Left ventricle myocardium superior (tissue), 1 donor: ENCODE measurements at regions of chr3 and their contacts with region 1.

Region 1: DNA sequence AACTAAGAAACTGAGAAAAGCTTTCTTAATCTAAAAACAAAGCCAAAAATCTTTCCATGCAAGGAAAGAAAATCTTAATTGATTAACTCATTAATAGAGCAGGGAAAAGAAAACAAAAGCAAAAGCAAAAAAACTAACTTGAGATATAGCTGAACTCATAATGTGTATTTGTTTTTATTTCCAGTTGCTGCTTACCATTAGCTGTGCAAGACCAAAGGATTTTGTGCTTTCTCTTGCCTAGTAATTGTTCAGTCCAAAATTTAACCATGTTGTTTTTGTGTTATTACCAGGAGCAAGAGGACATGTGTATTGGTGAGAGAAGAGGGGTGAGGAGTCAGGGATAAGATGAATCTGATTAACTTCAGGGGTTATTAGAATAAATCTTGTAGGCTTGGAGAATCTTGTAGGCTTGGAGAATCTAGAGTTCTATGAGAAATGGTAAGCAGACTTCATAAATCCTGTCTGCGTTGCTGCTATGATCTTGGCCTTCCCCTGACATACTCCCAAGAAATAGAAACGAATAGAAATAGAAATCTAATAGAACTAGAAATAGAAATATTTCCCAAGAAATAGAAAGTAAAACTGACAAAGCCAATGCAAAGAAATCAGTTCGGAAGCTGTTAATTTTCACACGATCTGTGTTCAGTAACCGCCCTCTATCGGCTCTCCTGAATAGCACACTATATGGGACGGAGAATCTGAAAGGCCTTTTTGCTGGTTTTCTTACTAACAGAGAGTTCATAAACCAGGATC is 72.6 kb upstream of the TNFSF10 start:
- DNase-seq: no peak
- ATAC-seq: peak; percentile 79

Region 2: GRCh38 chr3:172511783-172512762 is 83.7 kb before region 1 on chr3:
- intact Hi-C with region 1: loop called (anchors 10 kb)
- DNase-seq: peak; percentile 69
- ATAC-seq: peak; percentile 69

Region 3: DNA sequence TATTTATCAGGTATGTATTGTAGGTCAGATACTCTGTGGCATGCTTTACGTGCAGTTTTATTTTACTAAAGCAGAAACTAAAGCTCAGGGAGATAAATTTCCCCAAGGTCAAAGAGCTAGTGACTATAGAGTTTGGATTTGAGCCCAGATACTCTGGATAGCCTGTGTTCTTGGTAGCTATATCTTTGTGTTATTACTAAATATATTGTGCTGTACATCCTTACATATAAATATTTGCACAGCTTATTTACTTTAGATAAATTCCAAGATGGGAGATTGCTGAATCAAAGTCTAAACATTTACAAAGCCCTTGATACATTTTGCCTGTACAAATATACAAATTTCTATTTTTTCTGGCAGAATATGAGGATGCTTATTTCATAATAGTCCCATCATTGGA is 1602.4 kb after region 1 on chr3:
- intact Hi-C with region 1: no loop called
- DNase-seq: no peak
- ATAC-seq: no peak